Adrenal gland (tissue), 19 donors: ENCODE measurements at regions of chr6 and their contacts with region 1.

Region 1: DNA sequence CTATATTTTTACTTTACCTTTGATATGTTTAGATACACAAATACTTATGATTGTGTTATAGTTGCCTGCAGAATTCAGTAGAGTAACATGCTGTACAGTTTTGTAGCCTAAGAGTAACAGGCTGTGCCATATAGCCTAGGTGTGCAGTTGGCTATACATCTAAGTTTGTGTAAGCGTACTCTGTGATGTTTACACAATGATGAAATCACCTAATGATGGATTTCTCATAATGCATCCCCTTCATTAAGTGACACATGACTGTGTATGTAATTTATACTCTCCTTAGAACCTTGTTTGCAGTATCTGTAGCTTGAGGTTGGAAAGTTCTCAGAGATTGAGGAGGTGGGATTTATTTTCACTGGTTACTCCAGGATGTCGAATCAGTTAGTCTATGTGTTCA is 67.0 kb upstream of the TMEM30A start:
- DNase-seq: no peak
- H3K4me3 ChIP-seq: no peak overlapping the region
- H3K27ac ChIP-seq: no peak overlapping the region
- H3K4me1 ChIP-seq: peaks cover 9 to 10% of the 10 kb centered on the region in 2 donors
- H3K27me3 ChIP-seq: no peaks in the 10 kb centered on the region
- CTCF ChIP-seq: no peak
- POLR2A ChIP-seq: no peak

Region 2: DNA sequence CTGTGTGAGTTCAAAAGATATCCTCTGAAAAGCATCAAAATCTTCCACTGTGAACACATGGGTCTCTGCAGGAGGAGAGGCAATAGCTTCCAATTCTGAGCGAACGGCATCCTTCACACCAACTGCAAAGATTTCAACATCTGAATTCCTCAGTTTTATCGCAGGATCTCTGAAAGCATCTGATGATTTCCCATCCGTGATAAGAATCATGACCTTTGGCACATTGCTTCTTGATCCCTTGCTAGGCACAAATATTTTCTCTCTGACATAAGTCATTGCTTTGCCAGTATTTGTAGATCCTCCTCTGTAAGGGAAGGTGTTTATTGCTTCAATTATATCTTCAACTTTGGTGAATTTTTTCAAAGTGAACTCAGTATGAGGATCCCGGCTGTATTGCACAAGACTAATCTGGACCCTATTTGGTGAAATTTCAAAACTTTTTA is 168.4 kb before region 1 on chr6:
- intact Hi-C with region 1: no loop called
- DNase-seq: no peak
- H3K4me3 ChIP-seq: no peak overlapping the region
- H3K27ac ChIP-seq: no peak overlapping the region
- H3K4me1 ChIP-seq: no peaks in the 10 kb centered on the region
- H3K27me3 ChIP-seq: no peaks in the 10 kb centered on the region
- CTCF ChIP-seq: no peak
- POLR2A ChIP-seq: no peak

Region 3: GRCh38 chr6:75504465-75505228 is 153.1 kb after region 1 on chr6:
- intact Hi-C with region 1: loop called in 1 of 2 experiments (anchors 10 kb)
- DNase-seq: peak in 4 of 7 donors; percentile 21 to 56 (median 33)
- H3K4me3 ChIP-seq: no peak overlapping the region
- H3K27ac ChIP-seq: no peak overlapping the region
- H3K4me1 ChIP-seq: no peaks in the 10 kb centered on the region
- H3K27me3 ChIP-seq: no peaks in the 10 kb centered on the region
- CTCF ChIP-seq: peak in 5 of 6 experiments; percentile 25 to 52 (median 47)
- POLR2A ChIP-seq: no peak